Mammary epithelial cell (primary cell): ENCODE measurements at regions of chr1 and their contacts with region 1.

Region 1: DNA sequence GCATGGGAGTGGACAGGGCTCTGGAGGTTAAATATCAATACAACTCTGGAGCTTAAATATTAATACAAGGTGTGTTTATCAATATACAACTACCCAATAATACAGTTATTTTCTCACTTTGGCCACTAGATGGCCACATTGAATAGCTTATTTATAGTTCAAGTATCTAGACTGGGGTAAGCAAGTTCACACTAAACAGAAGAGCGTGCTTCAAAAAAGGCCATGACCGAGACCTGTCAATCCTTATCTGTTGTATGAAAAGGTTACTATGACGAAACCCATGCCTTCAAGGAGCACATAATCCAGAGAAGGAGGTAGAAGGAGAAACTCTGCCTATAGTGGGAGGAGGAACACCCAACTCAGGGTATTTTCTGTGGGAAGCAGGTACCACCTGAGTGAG is 29.1 kb downstream of the CHML start:
- DNase-seq: peak; percentile 80
- H3K4me3 ChIP-seq: no peak overlapping the region
- H3K27ac ChIP-seq: peak overlapping the region; percentile 99
- H3K4me1 ChIP-seq: peaks cover 64% of the 10 kb centered on the region
- H3K27me3 ChIP-seq: no peaks in the 10 kb centered on the region
- CTCF ChIP-seq: peak; percentile 52 to 58

Region 2: DNA sequence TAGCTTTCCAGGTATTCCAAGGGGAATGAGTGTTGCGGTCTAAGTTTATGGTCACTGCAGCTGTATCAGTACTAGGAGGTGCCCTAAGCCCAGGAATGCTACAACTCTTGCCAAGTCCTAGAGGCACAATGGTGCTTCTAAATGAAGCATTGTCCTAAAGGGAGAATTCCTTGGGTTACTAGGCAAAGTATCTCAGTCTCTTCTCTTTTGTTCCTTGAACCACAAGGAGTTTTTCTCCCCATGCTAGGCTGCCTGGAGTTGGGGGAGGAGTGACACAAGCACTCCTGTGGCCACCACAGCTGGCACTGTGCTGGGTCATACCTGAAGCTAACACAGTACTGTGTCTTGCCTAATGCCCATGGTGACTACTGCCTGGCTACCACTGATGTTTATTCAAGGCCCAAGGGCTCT is 28.1 kb before region 1 on chr1:
- CTCF ChIA-PET with region 1: no interaction called
- dilution Hi-C with region 1: no loop called
- in situ Hi-C with region 1: no loop called
- intact Hi-C with region 1: loop called (anchors 2 kb)
- DNase-seq: peak; percentile 97
- H3K4me3 ChIP-seq: no peak overlapping the region
- H3K27ac ChIP-seq: peak overlapping the region; percentile 92
- H3K4me1 ChIP-seq: peaks cover 22% of the 10 kb centered on the region
- H3K27me3 ChIP-seq: no peaks in the 10 kb centered on the region
- CTCF ChIP-seq: no peak

Region 3: GRCh38 chr1:241627453-241628259 is 16.6 kb after region 1 on chr1:
- CTCF ChIA-PET with region 1: no interaction called
- dilution Hi-C with region 1: no loop called
- in situ Hi-C with region 1: no loop called
- intact Hi-C with region 1: loop called (anchors 1 kb)
- DNase-seq: peak; percentile 70
- H3K4me3 ChIP-seq: no peak overlapping the region
- H3K27ac ChIP-seq: no peak overlapping the region
- H3K4me1 ChIP-seq: no peaks in the 10 kb centered on the region
- H3K27me3 ChIP-seq: no peaks in the 10 kb centered on the region
- CTCF ChIP-seq: peak; percentile 68 to 75

Region 4: DNA sequence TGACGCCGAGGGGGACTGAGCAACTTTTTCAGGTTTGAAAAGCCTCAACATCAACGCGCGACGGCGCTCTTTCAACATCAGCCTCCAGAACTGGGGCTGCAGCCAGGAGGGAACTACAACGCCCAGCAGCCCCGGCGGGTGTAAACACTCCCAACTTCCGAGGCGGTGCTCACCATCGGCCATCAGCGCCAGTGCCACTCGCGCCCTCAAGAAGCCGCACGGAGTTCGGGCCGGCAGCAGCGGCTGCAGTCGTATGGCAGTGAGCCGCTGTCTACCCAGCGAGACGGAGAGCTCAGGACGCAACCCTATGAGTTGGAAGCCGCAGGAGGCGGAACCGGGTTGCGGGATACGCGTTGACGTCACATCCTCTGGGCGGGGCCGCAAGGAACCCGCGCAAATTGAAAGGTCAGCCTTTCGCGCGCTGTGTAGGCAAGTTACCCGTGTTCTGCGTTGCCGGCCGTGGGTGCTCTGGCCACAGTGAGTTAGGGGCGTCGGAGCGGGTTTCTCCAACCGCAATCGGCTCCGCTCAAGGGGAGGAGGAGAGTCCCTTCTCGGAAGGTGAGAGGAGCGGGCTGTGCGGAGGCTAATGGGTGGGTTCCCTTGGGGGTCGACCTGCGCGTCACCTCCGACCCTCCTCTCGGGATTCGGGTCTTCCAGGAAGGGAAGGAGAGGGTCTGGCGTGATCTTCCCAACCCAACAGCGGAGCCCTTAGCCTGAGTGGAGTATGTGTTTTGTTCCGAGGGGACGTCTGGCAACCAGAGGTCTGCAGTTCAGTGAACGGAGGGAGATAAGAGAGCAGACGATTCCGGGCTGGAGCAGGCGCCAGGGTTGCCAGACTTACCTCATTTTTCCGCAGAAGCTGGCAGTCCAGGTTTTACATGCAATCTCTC is 237.0 kb after region 1 on chr1 and contains the start of gene EXO1:
- CTCF ChIA-PET with region 1: no interaction called
- dilution Hi-C with region 1: no loop called
- in situ Hi-C with region 1: no loop called
- intact Hi-C with region 1: loop called (anchors 1 kb)
- DNase-seq: peak; percentile 93
- H3K4me3 ChIP-seq: peak within 1 kb of the TSS; percentile 83 to 96 (median 92)
- H3K27ac ChIP-seq: peak within 1 kb of the TSS; percentile 83
- H3K4me1 ChIP-seq: peaks cover 14% of the 10 kb centered on the region
- H3K27me3 ChIP-seq: no peaks in the 10 kb centered on the region
- CTCF ChIP-seq: peak in 1 of 2 donors; percentile 43
- total RNA-seq, gene EXO1: 3.3 to 21.4 TPM

Region 5: GRCh38 chr1:241998412-241998921 is 387.4 kb after region 1 on chr1:
- CTCF ChIA-PET with region 1: no interaction called
- dilution Hi-C with region 1: no loop called
- in situ Hi-C with region 1: no loop called
- intact Hi-C with region 1: loop called (anchors 5 kb)
- DNase-seq: peak; percentile 78
- H3K4me3 ChIP-seq: no peak overlapping the region
- H3K27ac ChIP-seq: no peak overlapping the region
- H3K4me1 ChIP-seq: peaks cover 3% of the 10 kb centered on the region
- H3K27me3 ChIP-seq: no peaks in the 10 kb centered on the region
- CTCF ChIP-seq: peak in 1 of 2 donors; percentile 48